ENCODE measurements at regions of chr14 and their contacts with region 1.

Region 1: GRCh38 chr14:93239869-93240677 is 33.0 kb downstream of the UBR7 start:
- DNase-seq: peak; percentile 67
- ATAC-seq: peak; percentile 94
- H3K4me3 ChIP-seq: peak overlapping the region in 1 of 2 experiments; percentile 15; a peak in 2 of 4 replicates
- H3K27ac ChIP-seq: peak overlapping the region; percentile 70
- H3K4me1 ChIP-seq: peaks cover 17% of the 10 kb centered on the region
- H3K27me3 ChIP-seq: no peaks in the 10 kb centered on the region
- CTCF ChIP-seq: no peak

Region 2: DNA sequence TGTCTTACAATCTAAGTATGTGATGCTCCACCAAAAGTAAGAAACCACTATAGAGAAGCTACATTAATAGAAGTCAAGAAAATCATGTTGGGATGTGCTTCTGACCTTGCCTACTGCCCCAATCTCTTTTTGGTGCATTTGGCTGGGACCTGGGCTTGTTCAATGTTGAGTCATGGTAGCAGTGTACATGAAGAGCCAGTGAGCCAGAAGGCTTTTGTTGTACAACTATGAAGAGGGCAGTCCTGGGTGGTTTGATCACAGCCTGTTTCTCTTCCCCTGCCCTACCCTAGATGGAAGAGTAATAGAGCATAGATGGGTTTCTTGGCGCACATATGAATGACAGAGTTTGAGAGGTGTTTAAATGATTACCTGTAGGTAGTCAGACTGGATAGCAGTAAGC is 23.3 kb after region 1 on chr14:
- CTCF ChIA-PET with region 1: interaction called, 10 read pairs
- POLR2A ChIA-PET with region 1: no interaction called
- in situ Hi-C with region 1: no loop called
- intact Hi-C with region 1: no loop called
- DNase-seq: no peak
- ATAC-seq: no peak
- H3K4me3 ChIP-seq: no peak overlapping the region
- H3K27ac ChIP-seq: no peak overlapping the region
- H3K4me1 ChIP-seq: no peaks in the 10 kb centered on the region
- H3K27me3 ChIP-seq: no peaks in the 10 kb centered on the region
- CTCF ChIP-seq: no peak